ENCODE measurements at regions of chr17 and their contacts with region 1.

Region 1: DNA sequence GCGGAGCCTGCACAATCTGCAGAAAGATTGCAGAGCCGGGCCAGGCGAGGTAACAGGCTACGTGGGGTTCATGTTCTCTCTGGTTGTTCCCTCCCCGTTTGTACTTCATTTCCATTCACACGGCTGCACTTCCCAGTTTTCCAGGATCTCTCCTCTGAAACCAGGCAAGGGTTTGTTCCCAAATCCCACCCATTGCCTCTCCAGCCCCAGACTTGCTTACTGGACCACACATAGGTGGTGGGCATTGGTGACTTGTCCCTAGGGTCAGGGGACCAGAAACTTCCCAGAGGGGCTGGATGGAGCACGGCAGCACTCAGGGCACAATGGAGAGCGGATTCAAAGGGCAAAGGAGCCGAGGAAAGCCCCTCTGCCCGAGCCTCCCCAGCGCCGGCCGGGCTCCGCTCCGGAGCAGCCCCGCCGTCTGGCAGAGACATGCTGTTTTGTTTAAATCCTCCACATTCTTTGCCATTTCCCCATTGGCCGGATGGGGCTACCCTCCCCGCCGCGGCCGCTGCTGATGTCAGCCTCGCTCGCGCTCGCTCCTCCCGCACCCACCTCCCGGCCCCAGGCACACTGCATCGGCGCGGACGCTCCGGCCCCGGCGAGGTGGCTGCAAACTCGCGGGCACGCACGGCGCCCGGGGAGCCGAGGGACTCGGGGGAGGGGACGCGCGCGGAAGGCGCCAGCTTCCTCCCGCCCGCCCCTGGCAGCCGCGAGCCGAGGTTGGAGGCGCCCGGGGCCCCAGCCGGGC is at the start of gene PITPNC1:
- DNase-seq: peak; percentile 79 to 89 (median 88)
- ATAC-seq: peak; percentile 82
- H3K4me3 ChIP-seq: peak within 1 kb of the TSS; percentile 92
- H3K4me3 Mint-ChIP-seq: peak within 1 kb of the TSS; percentile 86 to 99 (median 93)
- H3K27ac ChIP-seq: peak within 1 kb of the TSS; percentile 86
- H3K27ac Mint-ChIP-seq: peak within 1 kb of the TSS; percentile 84 to 98 (median 92)
- H3K4me1 ChIP-seq: peaks cover 17 to 33% of the 10 kb centered on the region in 2 donors
- H3K4me1 Mint-ChIP-seq: peaks cover 26 to 49% (median 38%) of the 10 kb centered on the region in 7 donors
- H3K27me3 ChIP-seq: no peaks in the 10 kb centered on the region
- H3K27me3 Mint-ChIP-seq: no peaks in the 10 kb centered on the region
- total RNA-seq, gene PITPNC1: 53.1 to 108 (median 99.6) TPM

Region 2: GRCh38 chr17:67359960-67360773 is 16.7 kb before region 1 on chr17:
- CTCF ChIA-PET with region 1: interaction called, 12 read pairs
- POLR2A ChIA-PET with region 1: interaction called, 19 read pairs
- intact Hi-C with region 1: loop called in 1 of 2 experiments (anchors 1 kb)
- DNase-seq: peak in 7 of 9 donors; percentile 54 to 78 (median 70)
- ATAC-seq: peak; percentile 97
- H3K4me3 ChIP-seq: no peak overlapping the region
- H3K4me3 Mint-ChIP-seq: peak overlapping the region; percentile 6 to 77 (median 49)
- H3K27ac ChIP-seq: peak overlapping the region; percentile 58
- H3K27ac Mint-ChIP-seq: peak overlapping the region; percentile 60 to 94 (median 80)
- H3K4me1 ChIP-seq: peaks cover 33 to 39% of the 10 kb centered on the region in 2 donors
- H3K4me1 Mint-ChIP-seq: peaks cover 47 to 81% (median 60%) of the 10 kb centered on the region in 7 donors
- H3K27me3 ChIP-seq: no peaks in the 10 kb centered on the region
- H3K27me3 Mint-ChIP-seq: no peaks in the 10 kb centered on the region

Region 3: GRCh38 chr17:67421869-67422273 is 45.0 kb after region 1 on chr17:
- CTCF ChIA-PET with region 1: interaction called, 20 read pairs
- POLR2A ChIA-PET with region 1: interaction called, 13 read pairs
- intact Hi-C with region 1: loop called in 1 of 2 experiments (anchors 1 kb)
- DNase-seq: peak in 8 of 9 donors; percentile 46 to 86 (median 82)
- ATAC-seq: peak; percentile 97
- H3K4me3 ChIP-seq: peak overlapping the region; percentile 19
- H3K4me3 Mint-ChIP-seq: peak overlapping the region; percentile 8 to 79 (median 69)
- H3K27ac ChIP-seq: peak overlapping the region; percentile 82
- H3K27ac Mint-ChIP-seq: peak overlapping the region; percentile 90 to 99 (median 97)
- H3K4me1 ChIP-seq: peaks cover 51 to 71% of the 10 kb centered on the region in 2 donors
- H3K4me1 Mint-ChIP-seq: peaks cover 54 to 100% (median 87%) of the 10 kb centered on the region in 7 donors
- H3K27me3 ChIP-seq: no peaks in the 10 kb centered on the region
- H3K27me3 Mint-ChIP-seq: no peaks in the 10 kb centered on the region

Region 4: DNA sequence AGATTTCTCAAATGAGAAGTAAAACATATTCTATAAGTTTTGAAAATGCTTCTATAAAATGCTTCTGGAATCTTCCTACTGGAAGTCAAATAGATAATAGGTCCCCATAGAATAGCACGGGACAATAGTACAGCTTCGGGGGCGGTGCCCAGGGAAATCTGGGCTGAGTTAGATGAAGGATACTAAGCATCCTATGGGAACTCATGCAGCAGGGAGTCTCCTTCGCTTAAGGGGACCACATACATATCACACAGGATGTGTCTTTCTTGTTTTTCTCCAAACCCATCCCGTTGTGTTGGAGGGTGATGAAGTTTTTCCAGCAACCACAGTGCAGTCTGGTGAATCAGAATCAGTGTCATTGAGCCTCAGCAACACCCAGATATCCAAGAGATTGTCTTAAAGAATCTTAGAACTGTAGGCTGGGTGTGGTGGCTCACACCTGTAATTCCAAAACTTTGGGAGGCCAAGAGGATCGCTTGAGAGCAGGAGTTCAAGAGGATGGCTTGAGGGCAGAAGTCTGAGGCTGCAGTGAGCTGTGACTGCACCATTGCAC is 84.4 kb after region 1 on chr17:
- CTCF ChIA-PET with region 1: interaction called, 12 read pairs
- POLR2A ChIA-PET with region 1: interaction called, 11 read pairs
- intact Hi-C with region 1: no loop called
- DNase-seq: no peak
- ATAC-seq: no peak
- H3K4me3 ChIP-seq: no peak overlapping the region
- H3K4me3 Mint-ChIP-seq: peak overlapping the region; percentile 3 to 84 (median 52)
- H3K27ac ChIP-seq: peak overlapping the region; percentile 50
- H3K27ac Mint-ChIP-seq: peak overlapping the region; percentile 69 to 98 (median 95)
- H3K4me1 ChIP-seq: peaks cover 24 to 57% of the 10 kb centered on the region in 2 donors
- H3K4me1 Mint-ChIP-seq: peaks cover 47 to 91% (median 83%) of the 10 kb centered on the region in 7 donors
- H3K27me3 ChIP-seq: no peaks in the 10 kb centered on the region
- H3K27me3 Mint-ChIP-seq: no peaks in the 10 kb centered on the region

Region 5: DNA sequence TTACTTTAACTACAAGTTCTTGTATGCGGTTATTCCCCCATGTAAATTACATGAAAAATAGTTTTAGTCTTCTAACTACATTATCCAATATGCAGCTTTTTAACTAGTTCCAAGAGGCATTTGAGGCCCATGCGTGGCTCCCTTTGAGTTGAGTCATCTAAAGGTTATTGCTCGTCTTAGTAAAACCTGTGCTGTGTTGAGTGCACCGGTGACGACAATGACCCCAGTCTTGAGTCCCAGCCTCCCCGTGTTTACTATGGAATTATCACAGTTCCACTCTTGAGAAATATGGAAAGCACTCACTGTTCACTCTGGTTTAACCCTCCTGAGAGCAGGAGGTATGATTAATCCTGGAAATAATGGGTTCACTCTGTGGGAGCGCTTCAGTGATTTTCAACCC is 119.4 kb after region 1 on chr17:
- CTCF ChIA-PET with region 1: no interaction called
- POLR2A ChIA-PET with region 1: no interaction called
- intact Hi-C with region 1: no loop called
- DNase-seq: no peak
- ATAC-seq: no peak
- H3K4me3 ChIP-seq: no peak overlapping the region
- H3K4me3 Mint-ChIP-seq: no peak overlapping the region
- H3K27ac ChIP-seq: no peak overlapping the region
- H3K27ac Mint-ChIP-seq: peak overlapping the region in 1 of 9 donors; percentile 56
- H3K4me1 ChIP-seq: peaks cover 10 to 26% of the 10 kb centered on the region in 2 donors
- H3K4me1 Mint-ChIP-seq: peaks cover 4 to 78% (median 65%) of the 10 kb centered on the region in 7 donors
- H3K27me3 ChIP-seq: no peaks in the 10 kb centered on the region
- H3K27me3 Mint-ChIP-seq: no peaks in the 10 kb centered on the region

Region 6: GRCh38 chr17:67602956-67603355 is 226.0 kb after region 1 on chr17:
- CTCF ChIA-PET with region 1: interaction called, 22 read pairs
- POLR2A ChIA-PET with region 1: interaction called, 6 read pairs
- intact Hi-C with region 1: loop called (anchors 1 kb)
- DNase-seq: peak in 8 of 9 donors; percentile 24 to 65 (median 53)
- ATAC-seq: peak; percentile 74
- H3K4me3 ChIP-seq: no peak overlapping the region
- H3K4me3 Mint-ChIP-seq: no peak overlapping the region
- H3K27ac ChIP-seq: no peak overlapping the region
- H3K27ac Mint-ChIP-seq: peak overlapping the region in 6 of 9 donors; percentile 36 to 83 (median 70)
- H3K4me1 ChIP-seq: no peaks in the 10 kb centered on the region
- H3K4me1 Mint-ChIP-seq: peaks cover 5 to 47% (median 39%) of the 10 kb centered on the region in 7 donors
- H3K27me3 ChIP-seq: no peaks in the 10 kb centered on the region
- H3K27me3 Mint-ChIP-seq: no peaks in the 10 kb centered on the region

Region 7: DNA sequence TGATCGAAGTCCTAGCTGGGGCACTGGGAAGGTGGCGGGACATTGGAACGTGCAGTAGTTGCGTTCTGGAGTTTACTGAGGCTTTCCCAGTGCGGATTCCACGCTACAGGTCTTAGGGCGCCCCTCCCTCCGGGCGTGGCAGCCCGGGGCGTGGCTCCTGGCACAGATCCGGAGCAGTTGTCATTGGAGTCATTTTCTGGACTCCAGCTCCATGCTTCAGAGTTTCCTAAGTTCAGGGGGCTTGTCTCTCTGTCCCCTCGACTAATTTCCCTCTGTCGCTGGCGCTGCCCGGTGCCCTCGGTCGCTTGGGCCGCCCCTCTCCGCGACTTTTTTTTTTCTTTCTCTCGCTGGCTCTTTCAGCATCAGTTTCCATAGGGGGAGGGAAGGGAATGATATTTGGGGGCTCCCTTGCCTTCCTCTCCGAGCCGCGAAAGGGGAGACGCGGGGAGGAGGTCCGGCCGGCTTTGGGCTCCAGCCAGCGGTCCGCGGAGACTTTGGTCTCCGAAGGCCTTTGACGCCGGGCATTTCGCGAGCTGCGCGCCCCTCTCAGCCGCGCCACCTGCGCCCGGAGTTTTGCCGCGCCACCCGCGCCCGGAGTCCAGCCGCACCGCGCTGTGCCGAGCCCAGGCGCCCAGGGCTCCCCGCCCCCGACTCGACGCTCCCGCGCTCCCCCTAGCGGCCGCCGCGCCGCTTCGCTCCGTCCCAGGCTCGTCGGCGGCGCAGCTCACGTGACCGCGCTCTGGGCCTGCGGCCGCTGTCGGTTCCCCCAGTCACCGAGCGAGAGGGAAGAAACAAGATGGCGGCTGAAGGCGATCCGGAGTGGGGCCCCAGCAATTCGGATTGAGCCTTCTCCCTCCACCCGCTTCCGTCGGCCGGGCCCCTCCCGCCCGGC is 448.1 kb after region 1 on chr17 and contains the start of gene BPTF:
- CTCF ChIA-PET with region 1: no interaction called
- POLR2A ChIA-PET with region 1: no interaction called
- intact Hi-C with region 1: loop called in 1 of 2 experiments (anchors 1 kb)
- DNase-seq: peak; percentile 84 to 95 (median 90)
- ATAC-seq: peak; percentile 93
- H3K4me3 ChIP-seq: peak within 1 kb of the TSS; percentile 77
- H3K4me3 Mint-ChIP-seq: peak within 1 kb of the TSS; percentile 85 to 99 (median 98)
- H3K27ac ChIP-seq: peak within 1 kb of the TSS; percentile 74
- H3K27ac Mint-ChIP-seq: peak within 1 kb of the TSS; percentile 96 to 99 (median 98)
- H3K4me1 ChIP-seq: peaks cover 17 to 28% of the 10 kb centered on the region in 2 donors
- H3K4me1 Mint-ChIP-seq: peaks cover 20 to 39% (median 33%) of the 10 kb centered on the region in 7 donors
- H3K27me3 ChIP-seq: no peaks in the 10 kb centered on the region
- H3K27me3 Mint-ChIP-seq: peaks cover 0 to 23% (median 0%) of the 10 kb centered on the region in 5 donors
- total RNA-seq, gene BPTF: 111 to 219 (median 163) TPM